Esophagus squamous epithelium (tissue), 5 donors: ENCODE measurements at regions of chr1 and their contacts with region 1.

Region 1: GRCh38 chr1:68116643-68117235 is 66.3 kb upstream of the DIRAS3 start:
- DNase-seq: no peak
- H3K4me3 ChIP-seq: peak overlapping the region in 1 of 4 donors; percentile 53
- H3K27ac ChIP-seq: no peak overlapping the region
- H3K4me1 ChIP-seq: peaks cover 0 to 19% (median 4%) of the 10 kb centered on the region in 3 donors
- H3K27me3 ChIP-seq: no peaks in the 10 kb centered on the region
- CTCF ChIP-seq: peak; percentile 52 to 90 (median 84)
- POLR2A ChIP-seq: no peak

Region 2: GRCh38 chr1:67760030-67760821 is 356.5 kb before region 1 on chr1:
- intact Hi-C with region 1: loop called (anchors 10 kb)
- DNase-seq: no peak
- H3K4me3 ChIP-seq: no peak overlapping the region
- H3K27ac ChIP-seq: peak overlapping the region; percentile 66 to 83 (median 72)
- H3K4me1 ChIP-seq: peaks cover 0 to 41% (median 9%) of the 10 kb centered on the region in 3 donors
- H3K27me3 ChIP-seq: no peaks in the 10 kb centered on the region
- CTCF ChIP-seq: peak; percentile 77 to 94 (median 88)
- POLR2A ChIP-seq: no peak

Region 3: GRCh38 chr1:68321084-68321685 is 204.4 kb after region 1 on chr1:
- intact Hi-C with region 1: loop called (anchors 5 kb)
- DNase-seq: no peak
- H3K4me3 ChIP-seq: no peak overlapping the region
- H3K27ac ChIP-seq: no peak overlapping the region
- H3K4me1 ChIP-seq: peaks cover 0 to 6% (median 0%) of the 10 kb centered on the region in 3 donors
- H3K27me3 ChIP-seq: no peaks in the 10 kb centered on the region
- CTCF ChIP-seq: peak; percentile 21 to 71 (median 68)
- POLR2A ChIP-seq: no peak

Region 4: DNA sequence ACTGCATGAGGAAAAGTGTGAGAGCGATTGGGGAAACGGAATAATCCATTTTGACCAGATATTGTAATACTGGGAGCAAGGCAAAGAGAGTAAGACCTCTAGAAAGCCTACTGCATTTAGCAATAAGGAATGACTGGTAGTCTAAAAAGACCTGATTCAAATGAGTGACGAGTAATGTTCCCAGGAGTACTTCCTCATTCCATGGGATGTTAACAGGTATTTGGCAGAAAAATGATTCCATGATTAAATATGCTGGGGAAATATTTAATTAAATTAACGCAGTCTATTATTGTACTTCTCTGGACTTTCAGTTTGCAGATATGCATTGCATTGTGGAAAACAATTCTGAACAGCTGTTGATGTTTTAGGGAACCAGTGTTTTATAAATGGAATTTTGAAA is 227.5 kb after region 1 on chr1:
- intact Hi-C with region 1: loop called (anchors 5 kb)
- DNase-seq: no peak
- H3K4me3 ChIP-seq: no peak overlapping the region
- H3K27ac ChIP-seq: no peak overlapping the region
- H3K4me1 ChIP-seq: peaks cover 0 to 5% (median 0%) of the 10 kb centered on the region in 3 donors
- H3K27me3 ChIP-seq: no peaks in the 10 kb centered on the region
- CTCF ChIP-seq: no peak
- POLR2A ChIP-seq: no peak